Aorta (tissue), 5 donors: ENCODE measurements at regions of chr14 and their contacts with region 1.

Region 1: DNA sequence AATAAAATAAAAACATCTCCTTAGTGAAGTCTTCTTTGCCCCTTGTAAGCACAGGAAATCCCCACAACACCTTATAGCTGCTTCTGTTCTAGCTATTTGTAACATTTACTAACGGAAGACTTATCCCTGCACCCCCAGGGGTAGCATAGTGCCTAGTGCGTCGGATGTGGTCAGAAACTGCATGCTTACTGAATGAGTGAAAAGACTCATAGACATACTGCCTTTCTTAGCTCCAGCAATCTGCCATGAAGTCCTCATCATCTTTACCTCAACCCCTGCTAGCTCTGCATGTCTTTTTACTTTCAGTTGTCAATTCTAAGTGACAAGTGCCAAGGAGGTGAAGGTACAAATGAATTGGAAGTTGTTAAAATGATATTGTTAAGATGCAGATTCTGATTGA is 12.9 kb downstream of the RIOX1 start:
- DNase-seq: no peak
- ATAC-seq: no peak
- H3K4me3 ChIP-seq: no peak overlapping the region
- H3K27ac ChIP-seq: no peak overlapping the region
- H3K4me1 ChIP-seq: no peaks in the 10 kb centered on the region
- H3K27me3 ChIP-seq: no peaks in the 10 kb centered on the region

Region 2: GRCh38 chr14:73211251-73212040 is 292.2 kb before region 1 on chr14:
- intact Hi-C with region 1: no loop called
- DNase-seq: no peak
- ATAC-seq: no peak
- H3K4me3 ChIP-seq: no peak overlapping the region
- H3K27ac ChIP-seq: no peak overlapping the region
- H3K4me1 ChIP-seq: peaks cover 0 to 4% of the 10 kb centered on the region in 2 donors
- H3K27me3 ChIP-seq: no peaks in the 10 kb centered on the region

Region 3: GRCh38 chr14:73443758-73444157 is 59.9 kb before region 1 on chr14:
- intact Hi-C with region 1: no loop called
- DNase-seq: no peak
- ATAC-seq: no peak
- H3K4me3 ChIP-seq: no peak overlapping the region
- H3K27ac ChIP-seq: no peak overlapping the region
- H3K4me1 ChIP-seq: no peaks in the 10 kb centered on the region
- H3K27me3 ChIP-seq: no peaks in the 10 kb centered on the region

Region 4: DNA sequence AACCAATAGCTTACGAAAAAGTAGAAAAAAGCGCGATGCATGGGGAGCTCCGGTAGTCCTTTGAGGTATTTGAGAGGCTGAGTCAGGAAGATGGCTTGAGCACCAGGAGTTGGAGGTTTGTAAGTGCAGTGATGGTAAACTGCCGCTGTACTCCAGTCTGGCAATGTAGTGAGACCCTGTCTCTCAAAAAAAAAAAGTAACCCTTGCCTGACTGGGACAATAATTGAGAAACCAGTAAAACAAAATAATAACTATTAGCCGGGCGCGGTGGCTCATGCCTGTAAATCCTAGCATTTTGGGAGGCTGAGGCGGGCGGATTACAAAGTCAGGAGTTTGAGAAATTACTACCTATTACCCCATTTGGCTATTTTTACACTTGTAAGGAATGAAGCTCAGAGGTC is 64.7 kb after region 1 on chr14:
- intact Hi-C with region 1: loop called in 1 of 2 experiments (anchors 10 kb)
- DNase-seq: no peak
- ATAC-seq: no peak
- H3K4me3 ChIP-seq: peak overlapping the region; percentile 63 to 82
- H3K27ac ChIP-seq: peak overlapping the region; percentile 52 to 98
- H3K4me1 ChIP-seq: no peaks in the 10 kb centered on the region
- H3K27me3 ChIP-seq: no peaks in the 10 kb centered on the region

Region 5: DNA sequence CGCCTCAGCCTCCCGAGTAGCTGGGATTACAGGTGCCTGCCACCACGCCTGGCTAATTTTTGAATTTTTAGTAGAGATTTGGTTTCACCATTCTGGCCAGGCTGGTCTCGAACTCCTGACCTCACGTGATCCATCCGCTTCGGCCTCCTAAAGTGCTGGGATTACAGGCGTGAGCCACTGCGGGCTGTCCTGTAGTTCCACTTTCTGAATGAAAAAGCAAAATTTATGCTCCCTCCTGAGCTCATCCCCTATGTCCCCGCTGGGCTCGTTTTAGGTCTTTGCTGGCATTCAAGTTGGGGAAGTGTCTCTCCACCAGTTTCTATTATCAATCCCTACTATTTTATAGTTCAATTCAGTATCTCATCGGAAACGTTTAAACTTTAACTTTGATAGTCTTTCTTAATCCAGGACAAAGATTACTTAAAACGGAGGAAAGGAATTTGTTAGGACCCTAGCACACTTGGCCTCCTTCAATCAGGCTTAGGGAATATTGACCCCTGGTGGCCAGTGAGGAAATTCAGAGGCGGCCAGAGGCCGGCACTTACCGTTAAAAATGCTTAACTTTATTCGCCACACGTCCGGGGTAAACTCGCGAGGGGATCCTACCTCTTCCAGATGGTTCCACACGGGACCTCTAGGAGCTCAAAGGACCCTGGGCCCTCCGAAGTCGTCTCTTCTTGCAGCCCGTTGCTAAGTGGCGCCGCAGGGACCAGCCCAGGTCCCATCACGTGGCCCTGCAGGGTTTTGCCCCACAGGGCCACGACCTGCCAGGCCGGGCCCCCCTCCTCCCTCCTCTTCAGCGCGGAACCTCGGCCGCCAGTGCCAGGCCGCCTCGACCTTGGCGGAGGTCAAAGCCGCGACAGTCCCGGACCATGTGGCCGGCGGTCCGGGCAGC is 129.7 kb after region 1 on chr14:
- intact Hi-C with region 1: loop called (anchors 2 kb)
- DNase-seq: peak; percentile 70 to 81
- ATAC-seq: peak; percentile 88
- H3K4me3 ChIP-seq: peak overlapping the region; percentile 40 to 44
- H3K27ac ChIP-seq: peak overlapping the region in 1 of 2 donors; percentile 22
- H3K4me1 ChIP-seq: no peaks in the 10 kb centered on the region
- H3K27me3 ChIP-seq: no peaks in the 10 kb centered on the region